Activated CD4-positive, alpha-beta memory T cell treated with anti-CD3 and anti-CD28 coated beads, Interleukin-2, amount 10 ng/mL, durations not matched to agents 7 days and 5 days (primary cell): ENCODE measurements at regions of chr6 and their contacts with region 1.

Region 1: DNA sequence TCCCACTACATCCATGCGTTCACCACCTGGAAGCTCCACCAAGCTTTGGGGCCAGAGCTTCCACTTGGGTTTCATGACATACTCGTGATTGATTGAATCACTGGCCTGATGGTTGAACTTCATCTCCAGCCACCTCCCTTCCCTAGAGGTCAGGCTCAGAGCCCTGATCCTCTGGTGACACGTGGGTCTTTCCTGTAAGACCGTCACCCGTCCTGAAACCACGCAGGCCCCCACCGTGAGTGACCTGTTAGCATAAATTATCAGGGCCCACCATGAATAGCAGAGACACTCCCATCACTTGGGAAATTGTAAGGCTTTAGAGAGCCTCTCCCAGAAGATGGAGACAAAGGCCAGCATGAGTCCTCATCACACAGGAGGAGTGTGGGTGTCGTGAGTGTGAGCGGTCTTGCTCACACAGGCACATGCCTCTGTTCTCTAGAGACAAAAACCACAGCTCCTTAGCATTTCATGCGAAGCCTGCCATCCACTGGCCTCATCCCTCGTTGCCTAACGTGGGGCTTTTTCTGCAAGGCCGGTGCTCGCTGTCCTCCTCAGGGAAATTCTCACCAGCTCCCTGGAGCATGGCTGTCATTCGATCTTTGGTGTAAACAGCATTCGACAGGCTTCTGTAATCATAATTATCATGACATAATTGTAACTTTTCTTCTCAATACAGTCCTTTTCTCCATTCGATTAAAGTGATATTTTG is 65.1 kb upstream of the DUSP22 start:
- DNase-seq: no peak
- H3K4me3 Mint-ChIP-seq: no peak overlapping the region
- H3K27ac Mint-ChIP-seq: peak overlapping the region; percentile 91
- H3K4me1 Mint-ChIP-seq: peaks cover 77% of the 10 kb centered on the region
- H3K27me3 Mint-ChIP-seq: peaks cover 7% of the 10 kb centered on the region

Region 2: DNA sequence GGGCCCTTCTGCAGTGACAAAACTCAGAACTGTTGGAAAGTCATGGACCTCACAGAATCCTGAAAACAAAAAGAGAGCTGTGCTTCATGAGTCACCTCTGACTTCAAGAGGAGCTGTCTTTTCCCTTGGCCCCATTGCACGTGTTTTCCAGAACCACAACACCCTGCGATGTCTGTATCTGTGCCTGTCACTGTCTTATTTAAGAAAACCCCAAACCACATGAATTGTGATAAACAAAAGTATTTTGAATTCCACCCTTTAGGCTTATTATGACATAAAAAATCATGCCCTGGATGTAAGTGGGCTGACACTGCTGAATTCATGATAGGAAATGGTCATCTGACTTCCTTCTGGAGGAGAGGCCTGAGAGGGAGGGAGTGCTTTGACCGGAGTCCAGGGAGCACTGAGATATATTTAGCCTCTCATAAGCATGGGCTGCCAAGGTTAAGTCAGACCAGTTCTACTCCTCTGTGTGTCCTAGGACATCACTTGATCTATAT is 31.3 kb before region 1 on chr6:
- CTCF ChIA-PET with region 1: interaction called, 6 read pairs
- POLR2A ChIA-PET with region 1: interaction called, 59 read pairs
- DNase-seq: peak; percentile 49
- H3K4me3 Mint-ChIP-seq: no peak overlapping the region
- H3K27ac Mint-ChIP-seq: no peak overlapping the region
- H3K4me1 Mint-ChIP-seq: peaks cover 48% of the 10 kb centered on the region
- H3K27me3 Mint-ChIP-seq: peaks cover 3% of the 10 kb centered on the region

Region 3: GRCh38 chr6:209432-210103 is 17.7 kb before region 1 on chr6:
- CTCF ChIA-PET with region 1: interaction called, 6 read pairs
- POLR2A ChIA-PET with region 1: interaction called, 34 read pairs
- DNase-seq: peak; percentile 80
- H3K4me3 Mint-ChIP-seq: peak overlapping the region; percentile 84
- H3K27ac Mint-ChIP-seq: peak overlapping the region; percentile 93
- H3K4me1 Mint-ChIP-seq: peaks cover 41% of the 10 kb centered on the region
- H3K27me3 Mint-ChIP-seq: peaks cover 24% of the 10 kb centered on the region

Region 4: DNA sequence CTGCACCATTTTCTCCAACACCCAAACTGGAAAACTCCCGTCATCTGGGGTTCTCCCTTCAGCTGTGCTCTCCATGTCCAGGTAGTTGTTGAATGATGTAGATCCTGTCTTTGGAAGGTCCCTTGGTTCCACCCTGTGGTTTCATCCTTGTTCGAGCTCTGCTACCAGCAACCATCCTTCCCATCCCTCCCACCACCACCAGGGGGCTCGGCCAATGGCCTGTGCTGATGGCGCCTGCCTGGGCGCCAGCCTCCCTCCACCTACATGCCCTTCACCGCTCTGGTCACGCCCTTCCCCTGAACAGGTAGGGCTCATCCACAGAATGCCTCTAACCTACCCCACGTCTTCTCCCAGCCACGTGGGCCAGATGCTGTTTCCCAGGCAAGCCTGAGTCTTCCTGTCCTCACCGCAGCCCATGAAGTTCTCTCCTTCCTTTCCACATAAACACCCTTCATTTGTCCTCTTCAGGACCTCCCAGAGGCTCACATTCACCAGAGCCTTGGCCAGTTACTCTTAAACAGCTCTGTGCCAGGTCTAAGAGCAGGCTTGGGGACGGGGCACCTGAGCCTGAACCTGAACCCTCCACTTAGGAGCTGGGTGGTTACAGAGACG is 10.1 kb before region 1 on chr6:
- CTCF ChIA-PET with region 1: interaction called, 8 read pairs
- POLR2A ChIA-PET with region 1: interaction called, 27 read pairs
- DNase-seq: no peak
- H3K4me3 Mint-ChIP-seq: no peak overlapping the region
- H3K27ac Mint-ChIP-seq: peak overlapping the region; percentile 11
- H3K4me1 Mint-ChIP-seq: peaks cover 65% of the 10 kb centered on the region
- H3K27me3 Mint-ChIP-seq: peaks cover 12% of the 10 kb centered on the region

Region 5: GRCh38 chr6:259901-260508 is 32.8 kb after region 1 on chr6:
- CTCF ChIA-PET with region 1: interaction called, 5 read pairs
- POLR2A ChIA-PET with region 1: interaction called, 10 read pairs
- DNase-seq: no peak
- H3K4me3 Mint-ChIP-seq: peak overlapping the region; percentile 34
- H3K27ac Mint-ChIP-seq: peak overlapping the region; percentile 44
- H3K4me1 Mint-ChIP-seq: peaks cover 33% of the 10 kb centered on the region
- H3K27me3 Mint-ChIP-seq: no peaks in the 10 kb centered on the region

Region 6: GRCh38 chr6:291697-292505 is 64.7 kb after region 1 on chr6 and contains the start of gene DUSP22:
- CTCF ChIA-PET with region 1: interaction called, 11 read pairs
- POLR2A ChIA-PET with region 1: interaction called, 26 read pairs
- DNase-seq: peak; percentile 85
- H3K4me3 Mint-ChIP-seq: peak within 1 kb of the TSS; percentile 84
- H3K27ac Mint-ChIP-seq: peak within 1 kb of the TSS; percentile 94
- H3K4me1 Mint-ChIP-seq: peaks cover 48% of the 10 kb centered on the region
- H3K27me3 Mint-ChIP-seq: peaks cover 4% of the 10 kb centered on the region
- total RNA-seq, gene DUSP22: 36.3 to 41.5 TPM